Dendritic cell treated with granulocyte-macrophage colony-stimulating factor and Interleukin-4, amounts not matched to agents 40 ng/mL and 50 ng/mL, for 4 days (primary cell): ENCODE measurements at regions of chr2 and their contacts with region 1.

Region 1: GRCh38 chr2:173021939-173022371 is 53.7 kb upstream of the MAP3K20 start:
- H3K4me3 Mint-ChIP-seq: no peak overlapping the region
- H3K27ac Mint-ChIP-seq: no peak overlapping the region
- H3K4me1 Mint-ChIP-seq: peaks cover 7% of the 10 kb centered on the region
- H3K27me3 Mint-ChIP-seq: peaks cover 3% of the 10 kb centered on the region

Region 2: GRCh38 chr2:172864182-172864581 is 157.8 kb before region 1 on chr2:
- intact Hi-C with region 1: loop called (anchors 1 kb)
- H3K4me3 Mint-ChIP-seq: no peak overlapping the region
- H3K27ac Mint-ChIP-seq: no peak overlapping the region
- H3K4me1 Mint-ChIP-seq: no peaks in the 10 kb centered on the region
- H3K27me3 Mint-ChIP-seq: peaks cover 21% of the 10 kb centered on the region

Region 3: GRCh38 chr2:172972005-172972619 is 49.8 kb before region 1 on chr2:
- intact Hi-C with region 1: loop called (anchors 2 kb)
- H3K4me3 Mint-ChIP-seq: no peak overlapping the region
- H3K27ac Mint-ChIP-seq: no peak overlapping the region
- H3K4me1 Mint-ChIP-seq: peaks cover 44% of the 10 kb centered on the region
- H3K27me3 Mint-ChIP-seq: no peaks in the 10 kb centered on the region